B cell (primary cell): ENCODE measurements at regions of chr1 and their contacts with region 1.

Region 1: DNA sequence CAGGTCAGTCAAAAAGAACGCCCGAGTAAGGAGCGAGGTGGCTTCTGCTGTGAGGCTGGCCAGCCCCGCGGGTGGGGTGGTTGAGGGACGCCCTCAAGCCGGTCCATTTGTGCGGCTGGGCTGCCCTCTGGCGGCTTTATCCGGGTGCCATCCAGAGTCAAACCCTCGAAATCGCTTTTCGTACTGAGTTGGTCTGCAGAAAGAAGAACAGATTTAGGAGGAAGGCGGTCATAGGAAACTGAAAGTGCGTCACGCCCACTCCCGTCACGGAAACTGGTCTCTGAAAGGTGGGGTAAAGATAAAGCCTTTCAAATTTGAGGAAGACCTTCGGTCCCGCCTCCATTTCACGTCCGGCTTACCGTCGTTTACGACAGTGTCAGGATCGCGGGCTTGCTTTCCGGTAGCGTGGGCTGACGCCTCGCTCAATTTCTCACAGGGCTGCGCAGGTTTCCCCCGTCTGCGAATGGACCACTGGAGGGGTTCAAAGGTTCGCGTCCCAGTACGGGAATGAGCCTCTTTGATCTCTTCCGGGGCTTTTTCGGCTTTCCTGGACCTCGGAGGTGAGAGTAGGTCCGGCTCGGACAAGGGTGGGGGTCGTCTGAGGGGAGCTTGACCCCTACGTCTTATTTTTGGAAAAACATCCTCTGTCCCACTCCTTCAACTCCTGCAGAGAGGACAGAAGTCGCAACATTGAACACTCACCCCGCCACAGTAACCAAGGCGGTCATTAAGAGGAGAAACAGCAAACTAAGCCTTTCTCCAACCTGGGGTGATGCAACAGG is at the start of gene HAX1:
- DNase-seq: peak; percentile 99
- ATAC-seq: peak; percentile 91
- H3K4me3 ChIP-seq: peak within 1 kb of the TSS; percentile 88 to 99 (median 90)
- H3K4me3 Mint-ChIP-seq: peak within 1 kb of the TSS; percentile 90
- H3K27ac ChIP-seq: peak within 1 kb of the TSS; percentile 90 to 93
- H3K27ac Mint-ChIP-seq: peak within 1 kb of the TSS; percentile 94
- H3K4me1 ChIP-seq: peaks cover 14 to 21% of the 10 kb centered on the region in 2 donors
- H3K4me1 Mint-ChIP-seq: peaks cover 34% of the 10 kb centered on the region
- H3K27me3 ChIP-seq: no peaks in the 10 kb centered on the region
- H3K27me3 Mint-ChIP-seq: no peaks in the 10 kb centered on the region
- CTCF ChIP-seq: peak; percentile 82
- total RNA-seq, gene HAX1: 74.2 and 85.7 TPM in 2 replicates

Region 2: DNA sequence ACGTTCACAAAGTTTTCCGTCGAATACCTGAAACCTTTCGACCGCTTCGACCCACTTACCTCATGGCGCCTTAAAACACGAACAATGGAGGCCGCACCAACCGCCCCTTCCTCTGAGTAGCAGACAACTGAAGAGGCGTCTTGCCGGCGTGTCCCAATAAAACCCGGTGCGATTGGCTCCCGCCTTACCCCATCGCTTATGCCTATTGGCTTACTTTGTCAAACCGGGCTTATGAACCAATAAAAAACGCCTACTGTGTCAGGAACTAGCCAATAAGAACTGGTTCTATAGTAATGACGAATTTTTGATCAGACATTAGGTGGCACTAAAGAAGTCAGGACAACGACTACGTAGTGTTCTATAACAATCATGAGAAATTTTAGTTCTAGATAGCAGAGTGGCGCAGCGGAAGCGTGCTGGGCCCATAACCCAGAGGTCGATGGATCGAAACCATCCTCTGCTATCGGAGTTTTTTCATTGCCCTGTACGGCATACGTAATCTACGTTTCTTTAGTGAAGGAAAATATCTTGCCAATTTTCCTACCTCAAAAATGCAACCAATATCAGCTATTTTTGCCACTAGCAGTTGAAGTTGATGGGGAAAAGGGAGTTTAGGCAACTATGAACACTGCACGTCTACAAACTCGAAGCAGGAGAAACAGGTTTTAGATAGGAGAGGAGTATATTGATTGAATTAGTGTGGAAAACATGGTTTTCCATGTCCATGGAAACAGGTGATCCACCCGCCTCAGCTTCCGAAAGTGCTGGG is 601.4 kb before region 1 on chr1 and contains the start of gene ILF2:
- CTCF ChIA-PET with region 1: no interaction called
- POLR2A ChIA-PET with region 1: no interaction called
- intact Hi-C with region 1: loop called (anchors 5 kb)
- DNase-seq: peak; percentile 99
- ATAC-seq: peak; percentile 90
- H3K4me3 ChIP-seq: peak within 1 kb of the TSS; percentile 74 to 99 (median 94)
- H3K4me3 Mint-ChIP-seq: no peak within 1 kb of the TSS
- H3K27ac ChIP-seq: peak within 1 kb of the TSS; percentile 86 to 95
- H3K27ac Mint-ChIP-seq: no peak within 1 kb of the TSS
- H3K4me1 ChIP-seq: peaks cover 10 to 18% of the 10 kb centered on the region in 2 donors
- H3K4me1 Mint-ChIP-seq: peaks cover 18% of the 10 kb centered on the region
- H3K27me3 ChIP-seq: no peaks in the 10 kb centered on the region
- H3K27me3 Mint-ChIP-seq: peaks cover under 1% of the 10 kb centered on the region
- CTCF ChIP-seq: peak; percentile 26
- total RNA-seq, gene ILF2: 86.5 and 89.8 TPM in 2 replicates

Region 3: DNA sequence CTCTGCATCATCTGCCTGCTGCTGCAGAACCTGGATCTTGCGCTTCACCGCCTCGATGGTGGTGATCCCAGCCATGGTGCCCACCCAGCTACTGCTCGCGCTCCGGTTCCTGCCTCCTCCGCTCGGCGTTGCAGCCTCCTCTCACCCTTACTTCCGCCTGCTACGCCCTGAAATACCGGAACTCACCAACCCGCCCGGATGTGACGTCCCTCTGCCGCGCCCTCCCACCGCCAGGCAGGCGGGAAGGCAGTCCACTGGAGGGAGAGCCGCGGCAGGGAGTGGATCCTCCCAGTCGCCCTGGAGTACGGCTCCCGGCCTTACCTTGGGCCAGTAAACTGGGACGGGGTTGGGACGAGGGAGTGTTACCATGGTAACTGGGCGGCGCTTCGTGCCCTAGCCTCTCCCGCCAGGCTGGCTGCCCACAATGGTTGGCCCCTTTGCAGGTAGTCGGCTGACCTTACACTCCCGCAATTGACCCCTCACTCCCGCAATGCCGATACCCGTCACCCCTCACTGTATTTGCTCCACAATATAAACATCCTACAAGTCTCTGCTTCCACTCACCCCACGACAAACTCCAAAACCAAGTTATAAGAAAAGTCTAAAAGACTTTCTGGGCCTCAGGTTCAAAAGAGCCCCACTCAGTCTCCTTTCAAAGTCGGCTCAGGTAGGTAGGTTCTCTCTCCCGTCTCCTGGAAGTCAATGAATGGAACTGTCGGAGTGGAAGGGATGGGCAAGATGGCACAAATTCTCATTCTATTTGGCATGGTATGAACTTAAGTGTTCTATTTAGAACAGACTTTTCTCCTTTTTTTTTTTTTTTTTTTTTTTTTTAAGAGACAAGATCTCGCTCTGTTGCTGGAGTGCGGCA is 89.1 kb before region 1 on chr1:
- CTCF ChIA-PET with region 1: interaction called, 4 read pairs
- POLR2A ChIA-PET with region 1: interaction called, 4 read pairs
- intact Hi-C with region 1: loop called (anchors 1 kb)
- DNase-seq: peak; percentile 94
- ATAC-seq: peak; percentile 73
- H3K4me3 ChIP-seq: peak overlapping the region; percentile 54 to 99 (median 98)
- H3K4me3 Mint-ChIP-seq: peak overlapping the region; percentile 91
- H3K27ac ChIP-seq: peak overlapping the region; percentile 91 to 96
- H3K27ac Mint-ChIP-seq: peak overlapping the region; percentile 98
- H3K4me1 ChIP-seq: peaks cover 39 to 46% of the 10 kb centered on the region in 2 donors
- H3K4me1 Mint-ChIP-seq: peaks cover 48% of the 10 kb centered on the region
- H3K27me3 ChIP-seq: no peaks in the 10 kb centered on the region
- H3K27me3 Mint-ChIP-seq: peaks cover 4% of the 10 kb centered on the region
- CTCF ChIP-seq: no peak

Region 4: DNA sequence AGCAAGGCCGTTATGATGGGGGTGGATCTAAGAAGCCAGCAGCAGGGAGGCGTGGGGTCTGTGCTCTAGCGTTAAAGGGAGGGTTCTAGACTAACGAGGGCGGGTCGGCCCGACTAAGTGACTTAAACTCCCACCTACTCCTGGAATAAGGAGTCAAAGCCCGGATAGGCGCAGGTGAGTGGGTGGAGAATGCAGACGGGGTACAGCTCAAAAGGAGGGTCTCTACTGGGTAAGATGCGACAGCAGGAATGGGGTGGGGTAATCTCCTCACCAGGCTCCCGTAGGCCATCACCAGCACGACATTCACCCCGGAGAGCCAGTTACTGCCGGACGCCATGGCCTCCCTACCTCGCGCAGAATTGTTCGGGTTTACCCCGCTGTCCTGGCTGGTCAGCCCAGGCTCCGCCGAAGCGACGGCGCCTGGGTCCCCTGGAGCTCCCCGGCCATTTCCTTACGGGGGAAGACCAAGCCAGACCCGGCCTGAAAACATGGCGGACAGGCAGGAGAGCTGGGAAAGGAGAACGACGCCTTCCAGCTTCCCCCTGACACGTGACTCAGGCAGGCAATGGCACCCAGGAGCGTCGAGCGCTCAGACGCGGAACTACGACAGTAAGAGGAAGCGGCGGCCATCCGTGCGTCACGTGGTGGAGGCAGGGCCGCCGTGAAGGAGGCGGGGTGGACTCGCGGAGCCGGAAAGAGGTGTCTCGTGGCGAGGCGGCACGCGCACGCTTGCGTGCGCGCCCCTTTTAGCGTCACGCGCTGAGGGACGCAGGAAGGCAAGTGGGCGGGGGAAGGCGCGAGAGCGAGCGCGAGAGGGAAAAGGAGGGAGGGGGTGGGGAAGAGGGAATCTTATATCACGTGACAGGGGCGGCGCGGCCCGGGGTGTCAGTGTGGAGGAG is 52.1 kb before region 1 on chr1 and contains the start of gene UBAP2L:
- CTCF ChIA-PET with region 1: interaction called, 10 read pairs
- POLR2A ChIA-PET with region 1: interaction called, 6 read pairs
- intact Hi-C with region 1: loop called (anchors 1 kb)
- DNase-seq: peak; percentile 100
- ATAC-seq: peak; percentile 83
- H3K4me3 ChIP-seq: peak within 1 kb of the TSS; percentile 92 to 99 (median 95)
- H3K4me3 Mint-ChIP-seq: peak within 1 kb of the TSS; percentile 97
- H3K27ac ChIP-seq: peak within 1 kb of the TSS; percentile 98 to 100
- H3K27ac Mint-ChIP-seq: peak within 1 kb of the TSS; percentile 97
- H3K4me1 ChIP-seq: peaks cover 34 to 39% of the 10 kb centered on the region in 2 donors
- H3K4me1 Mint-ChIP-seq: peaks cover 66% of the 10 kb centered on the region
- H3K27me3 ChIP-seq: no peaks in the 10 kb centered on the region
- H3K27me3 Mint-ChIP-seq: no peaks in the 10 kb centered on the region
- CTCF ChIP-seq: no peak
- total RNA-seq, gene UBAP2L: 218 and 219 TPM in 2 replicates

Region 5: DNA sequence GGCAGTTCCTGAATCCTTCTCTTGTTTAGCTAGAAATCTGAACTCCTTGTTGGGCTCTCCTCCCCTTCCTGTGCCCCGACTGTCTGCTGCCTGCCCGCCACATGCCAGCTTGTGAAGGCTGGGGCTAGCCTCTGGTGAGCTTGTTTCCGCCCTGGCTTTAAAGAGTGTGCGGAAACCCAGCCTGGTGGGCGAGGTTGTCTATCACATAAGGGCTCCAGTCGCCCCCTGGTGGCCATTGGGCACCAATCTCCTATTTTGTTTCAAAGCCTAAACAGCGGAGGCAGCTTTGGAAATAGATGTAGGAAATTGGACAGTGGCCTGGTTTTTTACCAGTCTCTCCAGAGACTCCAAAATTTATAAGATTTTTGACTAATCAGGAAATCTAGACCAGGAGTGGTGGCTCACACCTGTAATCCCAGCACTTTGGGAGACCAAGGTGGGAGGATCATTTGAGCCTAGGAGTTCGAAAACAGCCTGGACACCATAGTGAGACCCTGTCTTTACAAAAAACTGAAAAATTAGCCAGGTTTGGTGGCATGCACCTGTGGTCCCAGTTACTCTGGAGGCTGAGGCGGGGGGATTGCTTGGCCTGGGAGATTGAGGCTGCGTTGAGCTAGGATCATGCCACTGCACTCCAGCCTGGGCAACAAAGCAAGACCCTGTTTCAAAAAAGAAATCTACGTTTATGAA is 62.8 kb after region 1 on chr1:
- CTCF ChIA-PET with region 1: interaction called, 52 read pairs
- POLR2A ChIA-PET with region 1: no interaction called
- intact Hi-C with region 1: loop called (anchors 2 kb)
- DNase-seq: peak; percentile 89
- ATAC-seq: peak; percentile 89
- H3K4me3 ChIP-seq: no peak overlapping the region
- H3K4me3 Mint-ChIP-seq: no peak overlapping the region
- H3K27ac ChIP-seq: no peak overlapping the region
- H3K27ac Mint-ChIP-seq: peak overlapping the region; percentile 86
- H3K4me1 ChIP-seq: peaks cover 10 to 17% of the 10 kb centered on the region in 2 donors
- H3K4me1 Mint-ChIP-seq: peaks cover 13% of the 10 kb centered on the region
- H3K27me3 ChIP-seq: no peaks in the 10 kb centered on the region
- H3K27me3 Mint-ChIP-seq: no peaks in the 10 kb centered on the region
- CTCF ChIP-seq: peak; percentile 91